B cell (primary cell): ENCODE measurements at regions of chr5 and their contacts with region 1.

Region 1: GRCh38 chr5:75511435-75512384 is at the starts of genes CERT1 and POLK:
- DNase-seq: peak; percentile 92
- ATAC-seq: peak; percentile 91
- H3K4me3 ChIP-seq: peak within 1 kb of the TSS; percentile 54 to 83 (median 80)
- H3K4me3 Mint-ChIP-seq: peak within 1 kb of the TSS; percentile 93
- H3K27ac ChIP-seq: peak within 1 kb of the TSS; percentile 74 to 79
- H3K27ac Mint-ChIP-seq: peak within 1 kb of the TSS; percentile 93
- H3K4me1 ChIP-seq: peaks cover 44 to 50% of the 10 kb centered on the region in 2 donors
- H3K4me1 Mint-ChIP-seq: peaks cover 67% of the 10 kb centered on the region
- H3K27me3 ChIP-seq: no peaks in the 10 kb centered on the region
- H3K27me3 Mint-ChIP-seq: no peaks in the 10 kb centered on the region
- CTCF ChIP-seq: no peak
- total RNA-seq, gene CERT1: 59.9 and 60.5 TPM in 2 replicates
- total RNA-seq, gene POLK: 41.6 and 42.9 TPM in 2 replicates

Region 2: DNA sequence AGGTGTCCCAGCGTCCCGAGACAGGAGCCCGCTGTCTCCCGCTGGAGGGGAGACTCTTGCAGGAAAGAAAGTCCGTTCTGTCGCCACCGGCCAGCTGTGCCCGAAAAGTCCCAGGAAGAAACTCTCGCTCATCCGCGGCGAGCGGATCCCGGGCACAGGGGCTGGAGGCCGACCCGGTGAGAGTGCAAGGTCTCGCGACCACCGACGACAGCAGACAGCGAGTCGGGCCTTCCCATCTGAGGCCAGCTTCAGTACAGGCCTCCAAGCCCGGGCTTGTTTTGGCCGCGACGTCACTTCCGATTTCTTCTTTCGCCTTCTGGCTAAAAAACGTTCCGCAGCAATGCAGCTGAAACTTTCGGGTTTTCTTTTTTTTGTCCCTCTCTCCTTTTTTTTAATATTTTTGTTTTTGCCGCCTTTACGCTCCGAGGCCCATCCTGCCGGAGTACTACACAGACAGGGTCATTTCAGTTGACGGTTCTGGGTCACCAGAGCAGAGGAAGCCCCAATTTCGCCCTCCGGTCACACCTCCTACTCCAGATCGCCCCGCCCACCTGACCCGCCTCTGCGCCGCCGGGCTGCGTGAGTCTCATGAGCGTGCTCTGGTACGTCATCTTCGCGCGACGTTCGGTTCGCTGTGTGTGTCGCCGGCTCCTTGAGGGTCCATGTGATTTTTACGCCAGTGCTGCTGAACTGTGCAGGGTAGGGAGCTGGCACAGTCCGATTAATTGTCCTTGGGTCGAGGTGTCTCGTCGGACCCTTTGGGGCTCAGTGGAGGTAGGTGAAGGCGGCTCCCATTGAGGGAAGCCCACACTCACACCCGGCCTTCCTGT is 1946.4 kb before region 1 on chr5 and contains the starts of genes ANKRA2 and UTP15:
- CTCF ChIA-PET with region 1: no interaction called
- POLR2A ChIA-PET with region 1: no interaction called
- intact Hi-C with region 1: loop called (anchors 10 kb)
- DNase-seq: peak; percentile 99
- ATAC-seq: peak; percentile 97
- H3K4me3 ChIP-seq: peak within 1 kb of the TSS; percentile 77 to 97 (median 92)
- H3K4me3 Mint-ChIP-seq: peak within 1 kb of the TSS; percentile 88
- H3K27ac ChIP-seq: peak within 1 kb of the TSS; percentile 92 to 97
- H3K27ac Mint-ChIP-seq: peak within 1 kb of the TSS; percentile 97
- H3K4me1 ChIP-seq: peaks cover 18 to 23% of the 10 kb centered on the region in 2 donors
- H3K4me1 Mint-ChIP-seq: peaks cover 36% of the 10 kb centered on the region
- H3K27me3 ChIP-seq: no peaks in the 10 kb centered on the region
- H3K27me3 Mint-ChIP-seq: no peaks in the 10 kb centered on the region
- CTCF ChIP-seq: no peak
- total RNA-seq, gene ANKRA2: 47.9 and 56.1 TPM in 2 replicates
- total RNA-seq, gene UTP15: 25.3 and 29.9 TPM in 2 replicates

Region 3: DNA sequence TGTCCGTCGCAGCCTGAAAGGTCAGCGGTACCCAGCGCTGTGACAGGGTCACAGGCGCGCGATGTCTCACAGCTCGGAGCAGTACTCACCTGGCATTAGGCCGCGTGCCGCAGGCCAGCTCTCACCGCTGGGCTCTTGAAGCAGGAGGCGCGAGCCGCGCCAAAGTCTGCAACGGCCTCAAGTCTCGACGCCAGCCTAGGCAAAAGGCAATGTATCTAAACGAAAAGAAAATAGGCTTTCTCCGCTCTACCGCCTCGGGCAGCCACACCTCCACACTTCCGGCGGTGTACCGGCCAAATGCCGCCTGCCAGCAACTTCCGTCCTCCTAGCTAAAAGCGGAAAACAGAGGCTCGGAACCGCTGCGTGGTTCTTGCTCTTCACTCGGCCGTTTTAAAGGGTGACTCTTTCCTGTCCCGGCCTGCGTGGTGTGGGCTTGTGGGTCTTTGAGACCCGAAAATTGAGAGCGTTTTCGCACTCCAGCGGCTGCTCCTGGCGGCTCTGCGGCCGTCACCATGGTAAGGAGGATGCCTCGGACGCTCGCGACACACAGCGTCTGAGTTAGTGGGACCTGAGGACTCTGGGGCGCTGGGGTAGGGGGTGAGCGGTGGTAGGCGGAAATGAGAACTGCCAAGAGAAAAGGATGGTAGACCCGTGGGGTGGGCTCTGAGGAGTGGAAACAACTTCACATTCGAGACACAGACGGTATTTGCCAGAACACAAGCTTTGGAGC is 744.7 kb before region 1 on chr5 and contains the starts of genes GFM2 and NSA2:
- CTCF ChIA-PET with region 1: no interaction called
- POLR2A ChIA-PET with region 1: no interaction called
- intact Hi-C with region 1: loop called (anchors 5 kb)
- DNase-seq: peak; percentile 95
- ATAC-seq: peak; percentile 89
- H3K4me3 ChIP-seq: peak within 1 kb of the TSS; percentile 71 to 99 (median 92)
- H3K4me3 Mint-ChIP-seq: peak within 1 kb of the TSS; percentile 100
- H3K27ac ChIP-seq: peak within 1 kb of the TSS; percentile 62 to 85
- H3K27ac Mint-ChIP-seq: peak within 1 kb of the TSS; percentile 98
- H3K4me1 ChIP-seq: peaks cover 20 to 21% of the 10 kb centered on the region in 2 donors
- H3K4me1 Mint-ChIP-seq: peaks cover 29% of the 10 kb centered on the region
- H3K27me3 ChIP-seq: no peaks in the 10 kb centered on the region
- H3K27me3 Mint-ChIP-seq: no peaks in the 10 kb centered on the region
- CTCF ChIP-seq: no peak
- total RNA-seq, gene GFM2: 22.6 and 28.5 TPM in 2 replicates
- total RNA-seq, gene NSA2: 126 and 129 TPM in 2 replicates

Region 4: DNA sequence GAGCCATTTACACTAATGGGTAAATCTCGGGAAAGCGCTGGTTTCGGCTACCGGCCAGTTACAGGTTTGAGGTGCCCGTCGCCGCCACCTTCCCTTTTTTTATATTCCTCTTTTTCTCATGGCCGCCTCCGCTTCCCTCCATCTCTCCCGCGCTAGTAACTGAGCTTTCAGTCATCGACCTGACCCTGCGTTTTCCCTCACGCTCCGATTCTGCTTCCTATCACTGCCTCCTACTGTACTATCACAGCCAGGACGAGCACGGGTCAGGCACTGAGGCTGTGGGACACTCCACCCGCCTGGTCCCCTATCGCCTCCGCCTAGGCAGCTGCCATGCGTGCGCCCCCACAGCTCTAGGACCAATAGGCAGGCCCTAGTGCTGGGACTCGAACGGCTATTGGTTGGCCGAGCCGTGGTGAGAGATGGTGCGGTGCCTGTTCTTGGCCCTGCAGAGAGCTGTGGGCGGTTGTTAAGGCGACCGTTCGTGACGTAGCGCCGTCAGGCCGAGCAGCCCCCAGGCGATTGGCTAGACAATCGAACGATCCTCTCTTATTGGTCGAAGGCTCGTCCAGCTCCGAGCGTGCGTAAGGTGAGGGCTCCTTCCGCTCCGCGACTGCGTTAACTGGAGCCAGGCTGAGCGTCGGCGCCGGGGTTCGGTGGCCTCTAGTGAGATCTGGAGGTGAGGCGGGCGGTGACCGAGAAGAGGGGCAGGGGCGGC is 174.9 kb before region 1 on chr5 and contains the start of gene HMGCR:
- CTCF ChIA-PET with region 1: interaction called, 3 read pairs
- POLR2A ChIA-PET with region 1: no interaction called
- intact Hi-C with region 1: loop called (anchors 1 kb)
- DNase-seq: peak; percentile 99
- ATAC-seq: peak; percentile 95
- H3K4me3 ChIP-seq: peak within 1 kb of the TSS; percentile 71 to 98 (median 88)
- H3K4me3 Mint-ChIP-seq: no peak within 1 kb of the TSS
- H3K27ac ChIP-seq: peak within 1 kb of the TSS; percentile 81 to 91
- H3K27ac Mint-ChIP-seq: no peak within 1 kb of the TSS
- H3K4me1 ChIP-seq: peaks cover 16 to 17% of the 10 kb centered on the region in 2 donors
- H3K4me1 Mint-ChIP-seq: peaks cover 30% of the 10 kb centered on the region
- H3K27me3 ChIP-seq: no peaks in the 10 kb centered on the region
- H3K27me3 Mint-ChIP-seq: no peaks in the 10 kb centered on the region
- CTCF ChIP-seq: peak; percentile 9
- total RNA-seq, gene HMGCR: 55.7 and 64.6 TPM in 2 replicates

Region 5: GRCh38 chr5:75566710-75567309 is 55.1 kb after region 1 on chr5:
- CTCF ChIA-PET with region 1: no interaction called
- POLR2A ChIA-PET with region 1: interaction called, 4 read pairs
- intact Hi-C with region 1: loop called (anchors 5 kb)
- DNase-seq: peak; percentile 30
- ATAC-seq: peak; percentile 81
- H3K4me3 ChIP-seq: peak overlapping the region in 1 of 5 experiments; percentile 3
- H3K4me3 Mint-ChIP-seq: peak overlapping the region; percentile 85
- H3K27ac ChIP-seq: peak overlapping the region; percentile 17 to 29
- H3K27ac Mint-ChIP-seq: peak overlapping the region; percentile 89
- H3K4me1 ChIP-seq: peaks cover 8 to 21% of the 10 kb centered on the region in 2 donors
- H3K4me1 Mint-ChIP-seq: peaks cover 41% of the 10 kb centered on the region
- H3K27me3 ChIP-seq: no peaks in the 10 kb centered on the region
- H3K27me3 Mint-ChIP-seq: no peaks in the 10 kb centered on the region
- CTCF ChIP-seq: no peak

Region 6: GRCh38 chr5:75717082-75717922 is 205.6 kb after region 1 on chr5 and contains the start of gene POC5:
- CTCF ChIA-PET with region 1: no interaction called
- POLR2A ChIA-PET with region 1: no interaction called
- intact Hi-C with region 1: loop called (anchors 1 kb)
- DNase-seq: peak; percentile 98
- ATAC-seq: peak; percentile 95
- H3K4me3 ChIP-seq: peak within 1 kb of the TSS; percentile 80 to 99 (median 89)
- H3K4me3 Mint-ChIP-seq: peak within 1 kb of the TSS; percentile 100
- H3K27ac ChIP-seq: peak within 1 kb of the TSS; percentile 80 to 85
- H3K27ac Mint-ChIP-seq: peak within 1 kb of the TSS; percentile 99
- H3K4me1 ChIP-seq: peaks cover 12 to 18% of the 10 kb centered on the region in 2 donors
- H3K4me1 Mint-ChIP-seq: peaks cover 37% of the 10 kb centered on the region
- H3K27me3 ChIP-seq: peaks cover 0 to 4% (median 0%) of the 10 kb centered on the region in 4 experiments
- H3K27me3 Mint-ChIP-seq: peaks cover 6% of the 10 kb centered on the region
- CTCF ChIP-seq: no peak
- total RNA-seq, gene POC5: 22.7 and 25.5 TPM in 2 replicates

Region 7: DNA sequence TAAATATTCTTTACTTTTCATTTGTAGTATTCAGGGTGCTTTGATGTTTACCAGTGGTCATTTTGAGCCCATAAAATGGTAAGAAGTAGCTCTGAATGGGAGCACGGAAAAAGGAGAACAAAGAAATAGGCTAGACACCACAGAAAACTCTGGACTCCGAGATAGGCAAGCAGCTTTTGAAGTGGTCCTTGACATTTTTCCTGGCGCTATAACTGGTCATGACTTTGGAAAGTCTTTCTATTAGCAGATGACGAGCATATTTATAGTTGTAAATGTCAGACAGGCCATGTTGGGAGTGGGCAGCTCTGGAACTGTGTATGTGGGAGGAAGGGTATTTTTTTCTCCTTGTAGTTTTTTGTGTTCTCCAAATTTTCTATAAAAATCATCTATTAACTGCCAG is 331.6 kb after region 1 on chr5:
- CTCF ChIA-PET with region 1: no interaction called
- POLR2A ChIA-PET with region 1: no interaction called
- intact Hi-C with region 1: no loop called
- DNase-seq: no peak
- ATAC-seq: no peak
- H3K4me3 ChIP-seq: no peak overlapping the region
- H3K4me3 Mint-ChIP-seq: no peak overlapping the region
- H3K27ac ChIP-seq: no peak overlapping the region
- H3K27ac Mint-ChIP-seq: no peak overlapping the region
- H3K4me1 ChIP-seq: peaks cover 30 to 31% of the 10 kb centered on the region in 2 donors
- H3K4me1 Mint-ChIP-seq: peaks cover 34% of the 10 kb centered on the region
- H3K27me3 ChIP-seq: no peaks in the 10 kb centered on the region
- H3K27me3 Mint-ChIP-seq: no peaks in the 10 kb centered on the region
- CTCF ChIP-seq: no peak